Dorsolateral prefrontal cortex (tissue), 120 donors: ENCODE measurements at regions of chr7 and their contacts with region 1.

Region 1: GRCh38 chr7:31613604-31614003 is 73.4 kb upstream of the PPP1R17 start:
- DNase-seq: no peak
- H3K4me3 ChIP-seq: no peak overlapping the region
- H3K27ac ChIP-seq: no peak overlapping the region
- H3K27me3 ChIP-seq: peaks cover 0 to 3% (median 0%) of the 10 kb centered on the region in 45 donors
- CTCF ChIP-seq: no peak

Region 2: GRCh38 chr7:31432836-31433340 is 180.7 kb before region 1 on chr7:
- intact Hi-C with region 1: loop called in 1 of 2 experiments (anchors 10 kb)
- DNase-seq: no peak
- H3K4me3 ChIP-seq: no peak overlapping the region
- H3K27ac ChIP-seq: no peak overlapping the region
- H3K27me3 ChIP-seq: peaks cover 0 to 27% (median 0%) of the 10 kb centered on the region in 45 donors
- CTCF ChIP-seq: no peak